HepG2 (cell line): ENCODE measurements at regions of chr1 and their contacts with region 1.

Region 1: DNA sequence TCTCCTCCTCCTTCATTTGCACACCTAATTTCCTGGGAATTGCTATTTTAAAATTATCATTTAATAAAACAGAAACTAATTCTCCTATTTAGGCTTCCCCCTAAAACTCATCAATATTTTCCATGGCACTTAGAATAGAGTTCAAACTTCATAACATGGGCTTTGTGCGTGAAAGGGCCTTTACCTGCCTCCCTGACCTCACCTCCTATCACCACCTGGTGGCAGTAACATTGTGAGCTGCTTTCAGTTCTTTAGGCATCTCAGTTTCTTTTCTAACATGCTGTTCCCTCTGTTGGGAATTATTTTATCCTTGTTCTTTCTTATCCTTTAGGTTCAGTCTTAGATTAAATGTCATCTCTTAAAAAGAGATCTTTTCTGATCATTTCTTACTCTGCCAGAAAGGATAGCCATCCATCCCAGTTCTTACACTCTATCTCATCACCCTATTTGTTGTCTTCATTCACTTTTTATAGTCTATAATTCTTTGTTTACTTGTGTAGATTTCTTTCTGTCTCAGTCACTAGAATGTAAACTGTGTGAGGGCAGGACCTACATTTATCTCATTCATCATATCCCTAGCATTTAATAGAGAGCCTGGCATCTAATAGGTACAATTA is 133.8 kb upstream of the KIAA1614 start:
- DNase-seq: peak; percentile 28
- ATAC-seq: peak; percentile 74
- H3K4me3 ChIP-seq: no peak overlapping the region
- H3K27ac ChIP-seq: no peak overlapping the region
- H3K4me1 ChIP-seq: peaks cover 6% of the 10 kb centered on the region; the same call in 1 of the 2 replicates
- H3K27me3 ChIP-seq: no peaks in the 10 kb centered on the region
- CTCF ChIP-seq: peak; percentile 71
- EP300 ChIP-seq: no peak
- POLR2A ChIP-seq: no peak
- RAD21 ChIP-seq: 0 out of 2 replicates have a peak, but pooled peaks have one; percentile 18

Region 2: DNA sequence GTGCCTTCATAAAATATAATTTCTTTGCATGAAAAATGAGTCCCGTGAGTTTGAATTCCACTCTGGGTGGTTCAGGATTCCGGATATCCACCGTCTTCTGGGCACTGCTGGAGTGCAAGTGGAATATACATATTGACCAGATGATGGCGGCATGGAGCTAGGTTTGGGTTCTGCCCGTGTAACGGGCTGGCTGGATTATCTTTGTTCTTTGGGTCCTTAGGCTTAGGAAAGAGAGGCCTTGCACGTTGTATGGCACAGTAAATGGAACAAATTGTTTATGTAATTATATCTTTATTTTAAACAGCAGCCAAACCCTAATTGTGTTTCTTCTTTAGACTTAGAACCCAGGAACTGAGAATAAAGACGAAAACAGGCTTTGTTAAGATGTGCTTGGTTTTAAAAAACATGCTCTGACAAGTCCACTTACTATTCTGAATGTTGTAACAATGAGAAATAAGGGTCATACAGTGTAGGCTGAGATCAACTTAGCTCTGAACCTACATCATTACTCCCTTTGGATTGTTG is 263.0 kb before region 1 on chr1:
- CTCF ChIA-PET with region 1: interaction called, 7 read pairs
- POLR2A ChIA-PET with region 1: no interaction called
- in situ Hi-C with region 1: no loop called
- intact Hi-C with region 1: loop called (anchors 1 kb)
- DNase-seq: peak; percentile 76
- ATAC-seq: peak; percentile 99
- H3K4me3 ChIP-seq: no peak overlapping the region
- H3K27ac ChIP-seq: peak overlapping the region; percentile 19
- H3K4me1 ChIP-seq: peaks cover 22% of the 10 kb centered on the region
- H3K27me3 ChIP-seq: no peaks in the 10 kb centered on the region
- CTCF ChIP-seq: peak; percentile 89
- EP300 ChIP-seq: no peak
- POLR2A ChIP-seq: no peak
- RAD21 ChIP-seq: peak; percentile 74

Region 3: GRCh38 chr1:180533266-180533987 is 245.5 kb before region 1 on chr1:
- CTCF ChIA-PET with region 1: interaction called, 6 read pairs
- POLR2A ChIA-PET with region 1: no interaction called
- in situ Hi-C with region 1: no loop called
- intact Hi-C with region 1: loop called (anchors 5 kb)
- DNase-seq: peak; percentile 53
- ATAC-seq: peak; percentile 90
- H3K4me3 ChIP-seq: peak overlapping the region in 1 of 3 experiments; percentile 4; a peak in 2 of 6 replicates
- H3K27ac ChIP-seq: no peak overlapping the region
- H3K4me1 ChIP-seq: peaks cover 22% of the 10 kb centered on the region; the same call in 1 of the 2 replicates
- H3K27me3 ChIP-seq: peaks cover 2 to 4% of the 10 kb centered on the region in 2 experiments; a peak in 3 of 5 replicates
- CTCF ChIP-seq: peak; percentile 88
- EP300 ChIP-seq: no peak
- POLR2A ChIP-seq: no peak
- RAD21 ChIP-seq: peak; percentile 76

Region 4: GRCh38 chr1:180631766-180632325 is 147.0 kb before region 1 on chr1 and contains the start of gene XPR1:
- CTCF ChIA-PET with region 1: no interaction called
- POLR2A ChIA-PET with region 1: no interaction called
- in situ Hi-C with region 1: no loop called
- intact Hi-C with region 1: loop called (anchors 5 kb)
- DNase-seq: peak; percentile 96
- ATAC-seq: peak; percentile 98
- H3K4me3 ChIP-seq: peak within 1 kb of the TSS; percentile 93 to 99 (median 95)
- H3K27ac ChIP-seq: peak within 1 kb of the TSS; percentile 87
- H3K4me1 ChIP-seq: peaks cover 32% of the 10 kb centered on the region
- H3K27me3 ChIP-seq: no peaks in the 10 kb centered on the region
- CTCF ChIP-seq: 0 out of 2 replicates have a peak, but pooled peaks have one; percentile 26
- EP300 ChIP-seq: no peak
- POLR2A ChIP-seq: peak; percentile 64 to 71
- RAD21 ChIP-seq: peak; percentile 18; the same call in 1 of the 2 replicates
- total RNA-seq, gene XPR1: 23.6 and 24.2 TPM in 2 replicates

Region 5: GRCh38 chr1:180695282-180695681 is 83.6 kb before region 1 on chr1:
- CTCF ChIA-PET with region 1: no interaction called
- POLR2A ChIA-PET with region 1: no interaction called
- in situ Hi-C with region 1: no loop called
- intact Hi-C with region 1: no loop called
- DNase-seq: no peak
- ATAC-seq: no peak
- H3K4me3 ChIP-seq: no peak overlapping the region
- H3K27ac ChIP-seq: no peak overlapping the region
- H3K4me1 ChIP-seq: no peaks in the 10 kb centered on the region
- H3K27me3 ChIP-seq: no peaks in the 10 kb centered on the region
- CTCF ChIP-seq: no peak
- EP300 ChIP-seq: no peak
- POLR2A ChIP-seq: no peak
- RAD21 ChIP-seq: no peak

Region 6: GRCh38 chr1:180849036-180849775 is 70.3 kb after region 1 on chr1:
- CTCF ChIA-PET with region 1: no interaction called
- POLR2A ChIA-PET with region 1: no interaction called
- in situ Hi-C with region 1: no loop called
- intact Hi-C with region 1: loop called (anchors 5 kb)
- DNase-seq: no peak
- ATAC-seq: no peak
- H3K4me3 ChIP-seq: no peak overlapping the region
- H3K27ac ChIP-seq: no peak overlapping the region
- H3K4me1 ChIP-seq: peaks cover 8% of the 10 kb centered on the region
- H3K27me3 ChIP-seq: no peaks in the 10 kb centered on the region
- CTCF ChIP-seq: no peak
- EP300 ChIP-seq: no peak
- POLR2A ChIP-seq: no peak
- RAD21 ChIP-seq: no peak

Region 7: DNA sequence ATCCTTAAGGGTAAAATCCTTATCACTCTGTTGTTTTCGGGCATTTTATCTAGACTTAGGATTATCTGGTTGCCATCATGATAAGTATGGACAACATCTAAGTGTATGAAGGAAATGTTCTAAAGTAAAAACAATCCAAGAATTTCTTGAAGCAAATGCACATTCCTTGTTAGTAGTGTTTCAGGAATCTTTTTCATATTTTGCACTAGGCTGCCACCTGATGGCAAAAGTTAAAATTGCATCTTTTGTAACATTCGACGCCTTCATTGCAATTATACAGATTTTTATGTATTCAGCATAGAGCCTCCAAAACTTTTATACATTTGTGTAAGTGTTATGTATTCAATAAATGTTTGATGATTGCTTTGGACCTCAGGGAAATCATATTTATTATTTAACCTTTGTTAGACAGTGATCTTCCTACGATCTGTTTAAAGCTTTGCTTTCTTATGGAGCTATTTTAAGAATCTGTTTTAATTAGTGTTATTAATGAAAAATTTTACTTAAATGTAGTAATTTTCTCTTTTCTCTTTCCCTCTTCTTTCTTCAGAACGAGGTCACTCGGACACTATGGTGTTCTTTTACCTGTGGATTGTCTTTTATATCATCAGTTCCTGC is 84.4 kb after region 1 on chr1:
- CTCF ChIA-PET with region 1: interaction called, 6 read pairs
- POLR2A ChIA-PET with region 1: no interaction called
- in situ Hi-C with region 1: no loop called
- intact Hi-C with region 1: loop called (anchors 5 kb)
- DNase-seq: peak; percentile 31
- ATAC-seq: no peak
- H3K4me3 ChIP-seq: no peak overlapping the region
- H3K27ac ChIP-seq: no peak overlapping the region
- H3K4me1 ChIP-seq: no peaks in the 10 kb centered on the region
- H3K27me3 ChIP-seq: no peaks in the 10 kb centered on the region
- CTCF ChIP-seq: peak; percentile 76
- EP300 ChIP-seq: no peak
- POLR2A ChIP-seq: no peak
- RAD21 ChIP-seq: peak; percentile 73